ENCODE measurements at regions of chr11 and their contacts with region 1.

Region 1: GRCh38 chr11:28107748-28108618 is at the starts of genes KIF18A and METTL15:
- DNase-seq: peak; percentile 98
- H3K4me3 Mint-ChIP-seq: peak within 1 kb of the TSS; percentile 98
- H3K27ac Mint-ChIP-seq: peak within 1 kb of the TSS; percentile 100
- H3K4me1 Mint-ChIP-seq: peaks cover 48% of the 10 kb centered on the region
- H3K27me3 Mint-ChIP-seq: no peaks in the 10 kb centered on the region
- CTCF ChIP-seq: no peak
- total RNA-seq, gene KIF18A: 8.9 and 12.9 TPM in 2 replicates
- total RNA-seq, gene METTL15: 16.8 and 19.9 TPM in 2 replicates

Region 2: DNA sequence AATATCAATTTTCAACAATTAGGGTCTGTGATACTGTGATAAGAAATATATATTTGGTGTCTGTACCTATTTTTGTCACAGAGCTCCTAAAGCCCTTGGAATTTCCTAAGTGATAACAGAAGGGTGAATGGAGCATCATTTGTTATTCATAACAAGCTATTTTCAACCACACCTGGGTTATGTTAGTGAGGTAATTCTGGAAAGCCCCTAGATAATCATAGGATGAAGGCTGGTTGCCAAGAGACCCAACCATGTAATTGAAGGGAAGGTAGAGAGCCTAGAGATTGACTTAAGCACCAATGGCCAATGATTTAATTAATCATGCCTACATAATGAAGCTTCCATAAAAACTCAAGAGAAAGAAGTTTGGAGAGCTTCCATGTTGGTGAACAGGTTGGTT is 109.4 kb before region 1 on chr11:
- CTCF ChIA-PET with region 1: no interaction called
- POLR2A ChIA-PET with region 1: no interaction called
- intact Hi-C with region 1: no loop called
- DNase-seq: no peak
- H3K4me3 Mint-ChIP-seq: no peak overlapping the region
- H3K27ac Mint-ChIP-seq: no peak overlapping the region
- H3K4me1 Mint-ChIP-seq: peaks cover 18% of the 10 kb centered on the region
- H3K27me3 Mint-ChIP-seq: no peaks in the 10 kb centered on the region
- CTCF ChIP-seq: no peak

Region 3: GRCh38 chr11:28086569-28086968 is 21.4 kb before region 1 on chr11:
- CTCF ChIA-PET with region 1: no interaction called
- POLR2A ChIA-PET with region 1: interaction called, 59 read pairs
- intact Hi-C with region 1: no loop called
- DNase-seq: no peak
- H3K4me3 Mint-ChIP-seq: no peak overlapping the region
- H3K27ac Mint-ChIP-seq: no peak overlapping the region
- H3K4me1 Mint-ChIP-seq: peaks cover 4% of the 10 kb centered on the region
- H3K27me3 Mint-ChIP-seq: no peaks in the 10 kb centered on the region
- CTCF ChIP-seq: no peak

Region 4: DNA sequence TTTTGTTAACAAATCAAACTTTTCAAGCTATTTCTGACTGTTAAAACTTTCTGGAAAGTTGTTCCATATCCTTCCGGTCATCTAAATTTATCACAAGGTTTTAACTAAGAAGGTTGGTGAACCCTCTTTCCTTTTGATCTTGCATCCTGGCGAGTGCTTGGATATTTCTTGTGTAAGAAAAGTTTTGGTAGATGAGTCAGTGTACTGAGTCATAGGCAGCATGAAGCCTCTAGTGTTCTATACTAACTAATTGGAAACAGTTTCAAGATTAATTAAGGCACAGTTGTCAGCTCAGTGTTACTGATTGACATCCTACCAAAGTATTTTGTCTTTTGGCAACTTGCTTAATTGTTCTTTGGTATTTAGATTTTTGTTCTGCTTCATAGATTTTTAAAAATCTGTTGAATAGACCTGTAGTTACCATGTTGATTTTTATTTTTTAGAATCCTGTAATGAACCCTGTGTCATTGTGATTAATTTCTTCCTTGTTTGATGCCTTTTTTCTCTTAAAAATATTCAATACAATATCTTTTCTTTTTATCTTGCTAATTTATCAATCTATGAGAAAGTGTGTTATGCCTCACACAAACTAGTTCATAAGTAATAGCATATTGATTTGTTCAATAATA is 38.3 kb after region 1 on chr11:
- CTCF ChIA-PET with region 1: interaction called, 3 read pairs
- POLR2A ChIA-PET with region 1: interaction called, 20 read pairs
- intact Hi-C with region 1: no loop called
- DNase-seq: peak; percentile 88
- H3K4me3 Mint-ChIP-seq: no peak overlapping the region
- H3K27ac Mint-ChIP-seq: no peak overlapping the region
- H3K4me1 Mint-ChIP-seq: peaks cover 7% of the 10 kb centered on the region
- H3K27me3 Mint-ChIP-seq: no peaks in the 10 kb centered on the region
- CTCF ChIP-seq: no peak

Region 5: GRCh38 chr11:28697920-28698827 is 590.2 kb after region 1 on chr11:
- CTCF ChIA-PET with region 1: interaction called, 3 read pairs
- POLR2A ChIA-PET with region 1: no interaction called
- intact Hi-C with region 1: loop called (anchors 10 kb)
- DNase-seq: peak; percentile 79
- H3K4me3 Mint-ChIP-seq: no peak overlapping the region
- H3K27ac Mint-ChIP-seq: peak overlapping the region; percentile 36
- H3K4me1 Mint-ChIP-seq: peaks cover 41% of the 10 kb centered on the region
- H3K27me3 Mint-ChIP-seq: no peaks in the 10 kb centered on the region
- CTCF ChIP-seq: peak; percentile 76